SK-N-SH (cell line): ENCODE measurements at regions of chr10 and their contacts with region 1.

Region 1: DNA sequence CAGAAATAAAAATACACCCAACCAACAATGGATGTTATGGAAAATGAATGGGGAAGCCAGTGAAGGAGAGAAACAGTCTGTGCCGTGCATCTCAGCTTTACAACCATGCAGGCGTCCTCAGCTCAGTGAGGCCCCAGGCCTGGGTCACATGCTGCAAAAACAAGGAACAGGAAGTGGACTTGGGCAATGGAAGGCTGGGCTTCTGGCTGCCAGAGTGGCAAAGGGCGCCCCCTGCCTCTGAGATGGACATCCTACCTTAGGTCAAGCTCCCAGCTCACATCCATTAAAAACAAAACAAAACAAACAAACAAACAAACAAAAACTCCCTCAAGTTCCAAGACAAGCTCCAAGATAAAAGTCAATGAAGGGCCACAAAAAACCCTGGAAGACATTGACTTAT is 54.7 kb upstream of the AFAP1L2 start:
- DNase-seq: peak; percentile 71
- H3K4me3 ChIP-seq: no peak overlapping the region
- H3K27ac ChIP-seq: no peak overlapping the region
- H3K4me1 ChIP-seq: no peaks in the 10 kb centered on the region
- H3K27me3 ChIP-seq: no peaks in the 10 kb centered on the region
- CTCF ChIP-seq: peak; percentile 51
- EP300 ChIP-seq: no peak
- RAD21 ChIP-seq: peak; percentile 65

Region 2: DNA sequence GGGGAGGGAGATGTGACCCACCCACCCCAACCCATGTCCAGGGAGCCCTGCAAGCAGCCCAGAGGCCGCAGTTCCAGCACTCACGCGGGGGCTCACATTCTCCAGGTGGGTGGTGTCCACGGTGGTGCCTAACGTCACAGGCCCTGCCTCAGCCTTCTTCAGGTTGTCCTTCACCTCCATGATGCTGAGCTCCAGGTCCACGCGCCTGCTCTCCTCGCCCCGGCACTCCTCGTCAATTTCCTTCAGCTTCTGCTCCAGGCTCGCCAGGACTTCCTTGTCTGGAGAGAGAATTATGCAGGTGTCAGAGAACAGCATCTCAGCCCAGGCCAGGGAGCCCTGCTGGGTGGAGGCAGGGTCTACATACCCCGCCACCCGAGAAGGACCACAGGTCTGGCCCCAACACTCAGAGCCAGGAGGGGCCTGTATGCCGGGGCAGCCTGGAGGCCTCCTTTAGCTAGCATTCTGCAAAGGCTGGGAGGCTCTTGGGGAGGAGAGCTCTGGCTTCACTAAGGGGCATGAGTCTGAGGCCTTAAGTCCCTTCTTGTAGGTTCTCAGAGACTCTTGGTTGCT is 161.7 kb before region 1 on chr10:
- CTCF ChIA-PET with region 1: interaction called, 13 read pairs
- POLR2A ChIA-PET with region 1: no interaction called
- DNase-seq: no peak
- H3K4me3 ChIP-seq: no peak overlapping the region
- H3K27ac ChIP-seq: no peak overlapping the region
- H3K4me1 ChIP-seq: no peaks in the 10 kb centered on the region; a peak in 1 of 4 replicates
- H3K27me3 ChIP-seq: no peaks in the 10 kb centered on the region
- CTCF ChIP-seq: no peak
- EP300 ChIP-seq: no peak
- RAD21 ChIP-seq: no peak

Region 3: DNA sequence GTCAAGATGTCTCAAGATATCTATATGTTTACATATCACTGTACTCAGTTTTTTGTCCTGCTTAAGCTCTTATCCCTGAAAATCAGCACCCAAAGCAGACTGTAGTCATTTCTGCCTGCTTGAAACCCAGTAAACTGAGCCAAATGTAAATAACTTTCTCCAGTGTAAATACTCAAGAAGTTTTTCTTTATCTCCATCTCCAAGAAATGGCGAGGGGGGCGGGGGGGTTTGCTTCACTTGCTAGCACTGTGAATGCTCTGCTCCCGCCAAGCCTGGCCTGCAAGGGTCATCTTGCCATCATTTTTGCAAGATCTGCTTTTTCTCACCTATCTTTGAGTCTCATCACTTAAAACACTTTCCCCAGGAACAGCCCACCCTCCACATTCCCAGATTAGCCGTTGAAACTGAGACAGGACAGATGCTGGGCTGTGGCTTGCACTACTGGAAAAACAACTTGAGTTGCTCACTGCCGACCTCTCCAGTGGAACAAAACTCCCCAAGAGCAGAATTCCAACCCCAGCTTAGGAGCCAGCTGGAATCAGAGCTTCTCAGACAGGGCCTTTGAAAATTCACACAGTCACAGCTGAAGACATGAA is 109.3 kb before region 1 on chr10:
- CTCF ChIA-PET with region 1: no interaction called
- POLR2A ChIA-PET with region 1: no interaction called
- DNase-seq: no peak
- H3K4me3 ChIP-seq: no peak overlapping the region
- H3K27ac ChIP-seq: no peak overlapping the region
- H3K4me1 ChIP-seq: peaks cover 0 to 5% of the 10 kb centered on the region in 2 experiments; a peak in 1 of 4 replicates
- H3K27me3 ChIP-seq: no peaks in the 10 kb centered on the region; the same call in 1 of the 2 replicates
- CTCF ChIP-seq: no peak
- EP300 ChIP-seq: no peak
- RAD21 ChIP-seq: no peak

Region 4: DNA sequence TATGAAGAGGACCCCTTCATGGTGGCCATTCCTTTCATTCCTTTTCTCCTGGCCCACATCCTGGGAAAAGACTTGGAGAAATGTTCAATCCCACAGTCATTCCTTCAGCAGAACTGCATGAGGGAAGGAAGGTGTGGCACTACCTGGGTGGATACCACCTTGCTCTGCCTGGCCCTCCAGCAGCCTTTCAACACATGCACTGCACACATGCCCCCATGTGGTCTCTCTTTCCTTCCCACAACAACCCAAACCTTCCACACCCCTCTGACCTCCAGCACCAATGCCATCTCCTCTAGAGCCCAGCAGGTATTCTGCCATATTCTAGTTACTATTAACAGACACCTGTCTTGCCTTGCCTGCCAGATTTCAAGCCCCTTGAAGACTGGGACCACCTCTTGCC is 14.1 kb before region 1 on chr10:
- CTCF ChIA-PET with region 1: interaction called, 18 read pairs
- POLR2A ChIA-PET with region 1: no interaction called
- DNase-seq: no peak
- H3K4me3 ChIP-seq: no peak overlapping the region
- H3K27ac ChIP-seq: no peak overlapping the region
- H3K4me1 ChIP-seq: peaks cover 0 to 3% of the 10 kb centered on the region in 2 experiments; a peak in 1 of 4 replicates
- H3K27me3 ChIP-seq: no peaks in the 10 kb centered on the region
- CTCF ChIP-seq: no peak
- EP300 ChIP-seq: no peak
- RAD21 ChIP-seq: no peak